ENCODE measurements at regions of chr6 and their contacts with region 1.

Region 1: DNA sequence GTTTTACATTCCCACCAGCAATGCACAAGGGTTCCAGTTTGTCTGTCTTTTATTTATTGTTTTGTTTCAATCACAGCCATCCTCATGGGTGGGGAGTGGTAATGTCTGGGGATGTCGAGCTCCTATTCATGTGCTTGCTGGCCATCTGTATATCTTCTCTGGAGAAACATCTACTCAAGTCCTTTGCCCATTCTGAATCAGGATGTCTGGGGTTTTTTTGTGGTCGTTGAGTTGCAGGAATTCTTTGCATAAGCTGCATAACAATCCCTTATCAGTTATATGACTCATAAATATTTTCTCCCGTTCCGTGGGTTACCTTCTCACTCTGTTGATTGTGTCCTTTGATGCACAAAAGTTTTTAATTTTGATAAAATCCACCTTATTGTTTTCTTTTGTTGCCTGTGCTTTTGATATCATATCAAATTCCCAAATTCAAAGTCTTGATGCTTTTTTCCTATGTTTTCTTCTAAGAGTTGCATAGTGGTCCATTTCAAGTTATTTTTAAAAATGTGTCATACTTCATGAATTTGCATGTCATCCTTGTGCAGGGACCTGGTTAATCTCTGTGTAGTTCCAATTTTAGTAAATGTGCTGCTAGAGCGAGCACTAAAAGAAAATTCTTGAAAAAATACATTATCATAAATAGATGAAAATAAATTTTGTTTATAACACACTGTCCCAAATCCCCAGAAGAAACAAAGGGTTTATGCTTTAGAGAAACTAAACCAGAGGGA is 54.9 kb upstream of the PDE10A start:
- DNase-seq: no peak
- ATAC-seq: no peak
- H3K4me3 Mint-ChIP-seq: no peak overlapping the region
- H3K27ac Mint-ChIP-seq: no peak overlapping the region
- H3K4me1 Mint-ChIP-seq: no peaks in the 10 kb centered on the region
- H3K27me3 Mint-ChIP-seq: no peaks in the 10 kb centered on the region
- CTCF ChIP-seq: no peak

Region 2: DNA sequence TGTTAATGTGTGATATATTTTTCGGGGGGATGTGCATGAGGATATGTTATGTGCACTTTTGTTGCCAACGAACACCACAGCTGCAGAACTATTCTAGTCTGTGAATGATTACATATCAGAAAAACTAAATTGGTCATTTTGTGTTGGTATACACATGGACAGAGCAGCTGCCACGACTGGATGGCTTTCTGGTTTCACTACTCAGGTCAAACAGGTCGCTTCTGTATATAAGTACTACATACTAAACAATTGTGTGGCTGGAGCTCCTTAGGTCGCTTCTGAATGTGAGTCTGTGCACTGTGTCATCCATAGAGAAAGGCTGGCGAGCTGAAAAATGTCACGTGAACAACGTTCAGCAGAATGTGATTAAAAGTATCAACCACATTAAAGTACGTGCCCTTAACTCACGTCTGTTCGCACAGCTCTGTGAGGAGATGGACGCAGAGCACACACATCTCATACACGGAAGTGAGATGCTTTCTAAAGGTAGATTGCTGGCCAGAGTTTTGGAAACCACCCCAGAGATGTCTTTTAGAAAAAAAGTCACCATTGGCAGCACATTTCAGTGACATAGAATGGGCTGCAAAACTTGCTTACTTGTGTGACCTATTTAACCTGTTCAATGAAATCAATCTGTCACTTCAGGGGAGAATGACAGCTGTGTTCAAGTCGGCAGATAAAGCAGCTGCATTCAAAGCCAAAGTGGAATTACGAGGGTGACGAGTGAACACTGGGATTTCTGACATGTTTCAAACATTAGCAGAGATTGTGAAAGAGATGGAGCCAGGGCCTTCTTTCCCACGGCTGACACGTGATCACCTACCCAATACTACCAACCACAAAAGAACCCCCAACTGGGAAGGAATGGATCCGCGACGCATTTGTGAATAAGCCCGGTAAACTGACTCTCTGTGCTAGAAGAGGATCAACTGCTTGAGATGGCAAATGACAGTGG is 231.4 kb before region 1 on chr6:
- CTCF ChIA-PET with region 1: no interaction called
- POLR2A ChIA-PET with region 1: no interaction called
- DNase-seq: no peak
- ATAC-seq: peak; percentile 32; the same call in 1 of the 2 replicates
- H3K4me3 Mint-ChIP-seq: no peak overlapping the region
- H3K27ac Mint-ChIP-seq: no peak overlapping the region
- H3K4me1 Mint-ChIP-seq: peaks cover 15% of the 10 kb centered on the region
- H3K27me3 Mint-ChIP-seq: no peaks in the 10 kb centered on the region
- CTCF ChIP-seq: no peak

Region 3: DNA sequence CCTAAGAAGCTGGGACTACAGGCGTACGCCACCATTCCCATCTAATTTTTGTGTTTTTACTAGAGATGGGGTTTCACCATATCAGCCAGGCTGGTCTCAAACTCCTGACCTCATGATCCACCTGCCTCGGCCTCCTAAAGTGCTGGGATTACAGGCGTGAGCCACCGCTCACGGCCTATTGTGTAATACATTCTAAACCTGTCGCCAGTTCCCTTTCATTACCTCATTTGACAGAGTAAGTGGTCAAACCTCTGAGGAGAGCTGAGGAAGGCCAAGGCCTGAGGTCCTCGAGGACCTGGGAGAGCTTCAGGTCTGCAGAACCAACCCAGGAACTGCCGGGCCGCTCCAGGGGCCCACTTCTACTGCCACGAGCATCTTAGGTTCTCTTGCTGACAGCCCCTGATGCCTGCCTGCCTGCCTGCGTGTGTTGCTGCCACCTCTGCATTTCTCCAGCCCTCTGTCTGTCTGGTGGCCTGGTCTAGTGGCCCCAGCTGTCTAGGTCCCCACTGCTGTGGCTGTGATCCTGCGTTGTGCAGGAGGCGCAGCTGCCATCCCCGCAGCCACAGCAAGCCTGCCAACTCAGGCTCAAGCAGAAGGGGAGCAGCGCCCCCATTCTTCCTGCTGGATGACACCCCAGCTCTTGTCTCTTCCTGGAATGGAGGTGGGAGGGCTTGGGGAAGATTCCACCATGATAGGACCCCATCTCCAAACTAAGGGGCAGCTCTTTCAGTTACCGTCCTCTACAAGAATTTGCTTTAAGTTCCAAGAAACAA is 545.0 kb after region 1 on chr6:
- CTCF ChIA-PET with region 1: no interaction called
- POLR2A ChIA-PET with region 1: no interaction called
- DNase-seq: no peak
- ATAC-seq: no peak; the same call in 1 of the 2 replicates
- H3K4me3 Mint-ChIP-seq: no peak overlapping the region
- H3K27ac Mint-ChIP-seq: no peak overlapping the region
- H3K4me1 Mint-ChIP-seq: peaks cover 18% of the 10 kb centered on the region
- H3K27me3 Mint-ChIP-seq: peaks cover 62% of the 10 kb centered on the region
- CTCF ChIP-seq: no peak

Region 4: DNA sequence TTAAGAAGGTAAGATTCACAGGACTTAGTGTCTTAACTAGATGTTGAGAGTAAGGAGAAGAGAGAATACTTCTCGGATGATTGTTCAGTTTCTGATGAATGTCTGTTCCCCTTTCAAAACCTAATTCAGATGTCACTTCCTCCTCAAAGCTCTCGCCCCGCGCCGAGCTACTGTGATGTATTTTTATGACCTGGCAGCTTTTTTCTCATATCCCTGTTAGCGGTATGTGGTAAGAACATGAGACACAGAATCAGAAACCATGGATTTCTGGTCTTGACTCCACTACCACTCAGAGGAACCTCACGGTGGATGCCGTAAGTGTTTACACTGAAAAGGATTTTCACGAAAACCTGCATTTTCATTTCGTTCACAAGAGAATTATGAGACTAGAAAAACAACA is 1329.7 kb after region 1 on chr6:
- CTCF ChIA-PET with region 1: no interaction called
- POLR2A ChIA-PET with region 1: interaction called, 10 read pairs
- DNase-seq: no peak
- ATAC-seq: no peak
- H3K4me3 Mint-ChIP-seq: no peak overlapping the region
- H3K27ac Mint-ChIP-seq: no peak overlapping the region
- H3K4me1 Mint-ChIP-seq: peaks cover 3% of the 10 kb centered on the region
- H3K27me3 Mint-ChIP-seq: no peaks in the 10 kb centered on the region
- CTCF ChIP-seq: no peak

Measured in WTC11 (cell line).